Caco-2 (cell line): ENCODE measurements at regions of chr10 and their contacts with region 1.

Region 1: DNA sequence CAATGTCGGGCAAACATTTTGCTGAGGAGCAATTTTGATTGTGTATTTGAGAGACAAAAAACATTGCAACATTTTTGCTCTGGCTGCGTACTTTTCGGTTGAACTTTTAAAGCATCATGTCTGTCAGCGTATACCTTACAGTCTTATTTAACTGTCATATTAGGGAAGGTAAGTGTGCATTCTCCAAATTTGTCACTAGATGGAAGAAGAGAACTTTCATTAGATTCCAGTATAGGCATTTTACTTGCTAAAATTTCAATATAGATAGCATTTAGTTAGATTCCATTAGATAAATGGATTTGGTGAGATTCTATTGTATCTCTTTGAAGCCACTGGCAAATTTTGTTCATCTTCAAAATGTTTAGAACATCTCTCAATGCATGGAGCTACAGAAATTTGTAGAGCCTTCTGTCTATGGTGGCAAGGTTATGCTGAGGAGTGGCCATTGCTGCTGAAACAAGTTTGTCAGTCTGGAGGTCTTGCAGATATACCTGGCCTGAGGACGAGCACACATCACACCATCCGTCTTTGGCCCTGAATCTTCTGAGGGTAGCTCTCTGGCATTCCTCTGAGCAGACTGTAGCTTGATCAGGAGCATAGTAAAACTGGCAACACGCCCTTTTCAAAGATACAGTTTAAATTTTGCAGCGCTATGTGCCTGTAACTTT is 437.5 kb upstream of the MBL2 start:
- DNase-seq: peak in 1 of 2 experiments; percentile 45
- H3K4me3 ChIP-seq: no peak overlapping the region
- H3K4me3 Mint-ChIP-seq: no peak overlapping the region
- H3K27ac Mint-ChIP-seq: no peak overlapping the region
- H3K4me1 ChIP-seq: 0 out of 2 replicates have a peak, but pooled peaks cover 3% of the 10 kb centered on the region
- H3K4me1 Mint-ChIP-seq: no peaks in the 10 kb centered on the region
- H3K27me3 ChIP-seq: no peaks in the 10 kb centered on the region
- H3K27me3 Mint-ChIP-seq: peaks cover 2% of the 10 kb centered on the region
- CTCF ChIP-seq: peak; percentile 77

Region 2: GRCh38 chr10:52818019-52818418 is 392.1 kb before region 1 on chr10:
- CTCF ChIA-PET with region 1: interaction called, 8 read pairs
- POLR2A ChIA-PET with region 1: no interaction called
- intact Hi-C with region 1: loop called (anchors 1 kb)
- DNase-seq: peak in 1 of 2 experiments; percentile 76
- H3K4me3 ChIP-seq: no peak overlapping the region
- H3K4me3 Mint-ChIP-seq: no peak overlapping the region
- H3K27ac Mint-ChIP-seq: no peak overlapping the region
- H3K4me1 ChIP-seq: no peaks in the 10 kb centered on the region; the same call in 1 of the 2 replicates
- H3K4me1 Mint-ChIP-seq: no peaks in the 10 kb centered on the region
- H3K27me3 ChIP-seq: no peaks in the 10 kb centered on the region; the same call in 1 of the 2 replicates
- H3K27me3 Mint-ChIP-seq: peaks cover 3% of the 10 kb centered on the region
- CTCF ChIP-seq: peak; percentile 89 to 90

Region 3: GRCh38 chr10:53276797-53277196 is 66.7 kb after region 1 on chr10:
- CTCF ChIA-PET with region 1: no interaction called
- POLR2A ChIA-PET with region 1: no interaction called
- intact Hi-C with region 1: no loop called
- DNase-seq: no peak
- H3K4me3 ChIP-seq: no peak overlapping the region
- H3K4me3 Mint-ChIP-seq: no peak overlapping the region
- H3K27ac Mint-ChIP-seq: no peak overlapping the region
- H3K4me1 ChIP-seq: peaks cover 9% of the 10 kb centered on the region; the same call in 1 of the 2 replicates
- H3K4me1 Mint-ChIP-seq: no peaks in the 10 kb centered on the region
- H3K27me3 ChIP-seq: no peaks in the 10 kb centered on the region
- H3K27me3 Mint-ChIP-seq: peaks cover 3% of the 10 kb centered on the region
- CTCF ChIP-seq: no peak

Region 4: DNA sequence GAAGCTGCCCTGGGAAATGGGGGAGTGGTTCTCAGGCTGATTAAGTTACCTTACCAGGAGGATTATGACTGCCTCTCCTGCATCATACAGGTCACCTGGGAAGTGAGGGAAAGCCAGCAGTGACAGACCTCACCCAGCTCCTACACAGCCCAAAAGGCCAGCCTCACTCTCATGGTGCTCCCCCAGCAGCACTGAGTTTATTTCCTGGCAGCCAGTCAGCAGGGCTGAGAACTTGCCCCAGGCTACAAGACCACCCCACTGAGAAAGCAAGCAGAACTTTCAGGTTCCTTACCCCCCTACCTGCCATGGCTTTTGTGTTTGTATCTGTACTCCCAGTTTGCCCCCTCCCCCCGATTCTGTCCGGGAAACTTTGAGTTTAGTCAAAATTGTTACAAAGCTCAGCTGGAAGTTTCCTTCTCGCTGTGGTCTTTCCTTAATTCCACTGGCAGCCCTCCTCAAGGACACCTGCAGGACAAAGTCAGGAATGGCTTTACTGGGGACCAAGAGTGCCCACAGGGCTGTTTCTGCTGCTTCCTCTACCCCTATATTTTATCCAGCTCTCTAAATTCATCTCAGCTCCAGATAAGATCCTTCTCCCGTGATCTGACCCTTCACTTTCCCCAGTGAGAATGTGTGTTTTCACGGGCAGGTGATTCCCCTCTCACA is 212.3 kb after region 1 on chr10:
- CTCF ChIA-PET with region 1: interaction called, 10 read pairs
- POLR2A ChIA-PET with region 1: no interaction called
- intact Hi-C with region 1: no loop called
- DNase-seq: no peak
- H3K4me3 ChIP-seq: no peak overlapping the region
- H3K4me3 Mint-ChIP-seq: no peak overlapping the region
- H3K27ac Mint-ChIP-seq: no peak overlapping the region
- H3K4me1 ChIP-seq: no peaks in the 10 kb centered on the region
- H3K4me1 Mint-ChIP-seq: no peaks in the 10 kb centered on the region
- H3K27me3 ChIP-seq: no peaks in the 10 kb centered on the region; the same call in none of the 2 replicates
- H3K27me3 Mint-ChIP-seq: peaks cover 2% of the 10 kb centered on the region
- CTCF ChIP-seq: peak in 1 of 2 experiments; percentile 12

Region 5: GRCh38 chr10:53846809-53847208 is 636.7 kb after region 1 on chr10:
- CTCF ChIA-PET with region 1: no interaction called
- POLR2A ChIA-PET with region 1: no interaction called
- intact Hi-C with region 1: loop called (anchors 2 kb)
- DNase-seq: no peak
- H3K4me3 ChIP-seq: no peak overlapping the region
- H3K4me3 Mint-ChIP-seq: no peak overlapping the region
- H3K27ac Mint-ChIP-seq: no peak overlapping the region
- H3K4me1 ChIP-seq: no peaks in the 10 kb centered on the region
- H3K4me1 Mint-ChIP-seq: no peaks in the 10 kb centered on the region
- H3K27me3 ChIP-seq: no peaks in the 10 kb centered on the region
- H3K27me3 Mint-ChIP-seq: no peaks in the 10 kb centered on the region
- CTCF ChIP-seq: peak; percentile 35 to 55

Region 6: GRCh38 chr10:54402576-54402975 is 1192.5 kb after region 1 on chr10:
- CTCF ChIA-PET with region 1: no interaction called
- POLR2A ChIA-PET with region 1: no interaction called
- intact Hi-C with region 1: loop called (anchors 1 kb)
- DNase-seq: peak in 1 of 2 experiments; percentile 59
- H3K4me3 ChIP-seq: no peak overlapping the region
- H3K4me3 Mint-ChIP-seq: no peak overlapping the region
- H3K27ac Mint-ChIP-seq: no peak overlapping the region
- H3K4me1 ChIP-seq: no peaks in the 10 kb centered on the region
- H3K4me1 Mint-ChIP-seq: no peaks in the 10 kb centered on the region
- H3K27me3 ChIP-seq: no peaks in the 10 kb centered on the region
- H3K27me3 Mint-ChIP-seq: peaks cover 4% of the 10 kb centered on the region
- CTCF ChIP-seq: peak; percentile 80 to 89